ENCODE measurements at regions of chr7 and their contacts with region 1.

Region 1: DNA sequence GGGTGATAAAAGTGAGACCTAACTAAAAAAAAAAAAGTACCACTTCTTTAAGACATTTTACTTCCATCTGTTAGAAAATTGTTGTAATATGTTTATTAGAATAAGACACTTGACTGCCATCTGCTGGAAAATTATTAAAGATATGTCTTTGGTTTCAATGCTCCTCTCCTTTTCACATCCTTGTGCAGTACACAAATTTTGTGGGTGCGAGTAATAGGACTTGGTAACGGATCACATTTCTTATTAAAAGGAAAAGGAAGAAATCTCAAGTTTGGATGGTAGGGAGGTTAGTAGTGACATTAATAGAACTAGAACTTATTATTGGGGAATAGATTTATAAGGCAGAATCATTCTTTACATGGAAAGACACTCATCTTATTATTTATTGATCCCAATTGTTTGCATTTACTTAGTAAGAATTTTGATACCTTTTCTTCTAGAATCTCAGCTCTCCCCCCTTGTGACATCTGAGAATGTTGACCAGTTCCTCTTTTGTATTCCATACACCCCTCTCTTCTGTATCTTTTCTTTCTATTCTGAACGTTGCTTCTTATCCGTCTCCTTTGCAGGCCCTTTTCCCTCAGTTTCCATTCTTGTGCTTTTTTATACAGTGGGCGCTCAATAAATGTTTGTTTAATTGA is 43.1 kb upstream of the RPA3 start:
- DNase-seq: peak in 1 of 2 donors; percentile 67
- ATAC-seq: peak; percentile 18 to 47 (median 37)
- H3K4me3 ChIP-seq: peak overlapping the region; percentile 49
- H3K4me3 Mint-ChIP-seq: peak overlapping the region; percentile 95
- H3K27ac ChIP-seq: peak overlapping the region; percentile 85
- H3K27ac Mint-ChIP-seq: peak overlapping the region; percentile 89 to 97
- H3K4me1 ChIP-seq: no peaks in the 10 kb centered on the region
- H3K4me1 Mint-ChIP-seq: peaks cover 37 to 41% of the 10 kb centered on the region in 2 donors
- H3K27me3 ChIP-seq: no peaks in the 10 kb centered on the region
- H3K27me3 Mint-ChIP-seq: no peaks in the 10 kb centered on the region
- CTCF ChIP-seq: peak; percentile 62

Region 2: GRCh38 chr7:7424151-7424873 is 337.1 kb before region 1 on chr7:
- intact Hi-C with region 1: loop called (anchors 10 kb)
- DNase-seq: peak; percentile 16 to 66
- ATAC-seq: peak; percentile 67 to 84 (median 74)
- H3K4me3 ChIP-seq: peak overlapping the region; percentile 46
- H3K4me3 Mint-ChIP-seq: peak overlapping the region; percentile 82
- H3K27ac ChIP-seq: peak overlapping the region; percentile 13
- H3K27ac Mint-ChIP-seq: peak overlapping the region in 1 of 2 donors; percentile 73
- H3K4me1 ChIP-seq: peaks cover 5% of the 10 kb centered on the region
- H3K4me1 Mint-ChIP-seq: peaks cover 0 to 7% of the 10 kb centered on the region in 2 donors
- H3K27me3 ChIP-seq: no peaks in the 10 kb centered on the region
- H3K27me3 Mint-ChIP-seq: peaks cover 0 to 2% of the 10 kb centered on the region in 2 donors
- CTCF ChIP-seq: peak; percentile 55

Region 3: GRCh38 chr7:7595451-7595850 is 166.0 kb before region 1 on chr7:
- intact Hi-C with region 1: loop called (anchors 1 kb)
- DNase-seq: peak in 1 of 2 donors; percentile 57
- ATAC-seq: peak; percentile 58 to 65 (median 63)
- H3K4me3 ChIP-seq: no peak overlapping the region
- H3K4me3 Mint-ChIP-seq: no peak overlapping the region
- H3K27ac ChIP-seq: no peak overlapping the region
- H3K27ac Mint-ChIP-seq: peak overlapping the region; percentile 58 to 68
- H3K4me1 ChIP-seq: peaks cover 3% of the 10 kb centered on the region
- H3K4me1 Mint-ChIP-seq: peaks cover 7 to 11% of the 10 kb centered on the region in 2 donors
- H3K27me3 ChIP-seq: no peaks in the 10 kb centered on the region
- H3K27me3 Mint-ChIP-seq: no peaks in the 10 kb centered on the region
- CTCF ChIP-seq: peak; percentile 67

Region 4: DNA sequence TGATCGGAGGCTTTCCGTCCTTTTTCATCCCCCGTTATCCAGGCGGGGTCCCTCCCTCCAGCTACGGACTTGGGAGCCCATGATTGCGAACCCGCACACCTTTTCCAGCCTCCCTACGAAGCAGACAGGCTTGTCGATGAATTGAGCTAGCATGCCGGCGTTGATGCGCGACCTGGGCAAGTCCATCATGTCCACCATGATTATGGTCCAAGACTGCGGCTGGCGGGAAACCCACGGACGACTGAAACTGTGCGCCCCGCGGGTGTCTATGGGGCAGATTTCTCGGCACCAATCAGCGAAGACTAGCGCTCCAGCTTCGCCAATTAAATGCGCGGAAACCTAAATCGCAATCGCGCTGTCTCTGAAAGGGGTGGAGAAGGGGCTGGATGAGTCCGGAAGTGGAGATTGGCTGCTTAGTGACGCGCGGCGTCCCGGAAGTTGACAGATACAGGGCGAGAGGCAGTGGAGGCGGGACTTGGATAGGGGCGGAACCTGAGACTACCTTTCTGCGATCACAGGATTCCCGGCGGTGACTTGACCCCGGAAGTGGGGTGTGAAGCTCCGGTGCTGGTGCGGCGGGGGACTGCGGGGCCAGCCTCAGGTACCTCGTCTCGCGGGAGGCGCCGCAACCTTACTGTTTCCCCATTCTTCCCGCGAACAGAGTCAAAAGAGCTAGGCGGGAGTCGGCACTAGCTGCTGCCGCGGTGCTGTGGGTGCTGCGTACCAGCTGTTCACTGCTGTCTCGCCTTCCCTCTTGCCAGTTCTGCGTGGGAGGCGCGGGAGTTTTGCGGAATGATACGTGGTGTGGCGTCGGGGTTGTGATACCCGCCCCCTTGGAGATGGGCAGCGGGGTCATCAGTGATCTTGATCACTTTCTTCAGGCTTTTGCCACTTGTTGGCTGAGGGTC is 121.0 kb before region 1 on chr7 and contains the start of gene UMAD1:
- intact Hi-C with region 1: loop called (anchors 1 kb)
- DNase-seq: peak; percentile 96 to 99
- ATAC-seq: peak; percentile 92 to 99 (median 95)
- H3K4me3 ChIP-seq: peak within 1 kb of the TSS; percentile 77
- H3K4me3 Mint-ChIP-seq: peak within 1 kb of the TSS; percentile 93
- H3K27ac ChIP-seq: peak within 1 kb of the TSS; percentile 90
- H3K27ac Mint-ChIP-seq: peak within 1 kb of the TSS; percentile 94 to 98
- H3K4me1 ChIP-seq: peaks cover 11% of the 10 kb centered on the region
- H3K4me1 Mint-ChIP-seq: peaks cover 26 to 42% of the 10 kb centered on the region in 2 donors
- H3K27me3 ChIP-seq: no peaks in the 10 kb centered on the region
- H3K27me3 Mint-ChIP-seq: no peaks in the 10 kb centered on the region
- CTCF ChIP-seq: no peak
- total RNA-seq, gene UMAD1: 12.3 to 16.5 (median 14.6) TPM

Region 5: GRCh38 chr7:7681179-7681935 is 80.1 kb before region 1 on chr7:
- intact Hi-C with region 1: loop called (anchors 1 kb)
- DNase-seq: peak in 1 of 2 donors; percentile 79
- ATAC-seq: peak; percentile 66 to 87 (median 77)
- H3K4me3 ChIP-seq: no peak overlapping the region
- H3K4me3 Mint-ChIP-seq: no peak overlapping the region
- H3K27ac ChIP-seq: peak overlapping the region; percentile 42
- H3K27ac Mint-ChIP-seq: peak overlapping the region; percentile 59 to 62
- H3K4me1 ChIP-seq: no peaks in the 10 kb centered on the region
- H3K4me1 Mint-ChIP-seq: peaks cover 25 to 29% of the 10 kb centered on the region in 2 donors
- H3K27me3 ChIP-seq: no peaks in the 10 kb centered on the region
- H3K27me3 Mint-ChIP-seq: no peaks in the 10 kb centered on the region
- CTCF ChIP-seq: peak; percentile 77

Region 6: DNA sequence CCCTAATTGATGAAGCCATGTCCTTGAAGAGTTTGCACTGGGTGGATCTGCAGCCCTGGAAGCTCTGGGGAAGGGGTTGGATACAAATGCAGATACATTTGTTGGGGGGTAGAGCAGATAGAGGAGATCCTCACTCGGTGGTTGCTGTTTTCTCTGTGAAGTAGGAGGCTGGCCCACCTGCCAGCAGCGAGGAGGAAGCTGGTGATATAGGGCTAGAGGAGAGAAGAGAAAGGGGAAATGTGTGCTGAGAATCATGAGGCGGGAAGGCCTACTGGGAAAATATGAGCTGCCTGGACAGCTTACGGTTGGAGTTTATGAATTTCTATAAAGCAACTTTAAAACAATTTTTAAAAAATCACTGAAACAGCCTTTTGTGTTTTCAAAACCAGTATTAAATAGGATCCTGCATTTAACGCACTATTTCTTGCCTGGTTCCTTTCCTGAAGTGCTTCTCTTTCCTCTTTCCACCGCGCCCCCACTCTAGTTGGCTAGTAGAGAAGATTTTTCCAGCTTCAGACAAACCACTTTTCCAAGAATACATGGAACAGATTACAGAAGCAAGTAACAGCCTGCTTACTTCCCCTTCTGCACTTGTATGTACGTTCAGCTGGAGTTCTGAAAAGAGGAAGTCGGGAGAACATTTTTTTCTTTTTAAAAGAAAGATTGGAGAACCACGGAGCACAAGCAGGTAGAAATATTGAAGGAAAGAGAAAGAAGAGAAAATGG is 106.5 kb after region 1 on chr7:
- intact Hi-C with region 1: loop called (anchors 5 kb)
- DNase-seq: no peak
- ATAC-seq: peak in 2 of 3 donors; percentile 5 to 33
- H3K4me3 ChIP-seq: no peak overlapping the region
- H3K4me3 Mint-ChIP-seq: no peak overlapping the region
- H3K27ac ChIP-seq: peak overlapping the region; percentile 63
- H3K27ac Mint-ChIP-seq: no peak overlapping the region
- H3K4me1 ChIP-seq: peaks cover 12% of the 10 kb centered on the region
- H3K4me1 Mint-ChIP-seq: peaks cover 0 to 8% of the 10 kb centered on the region in 2 donors
- H3K27me3 ChIP-seq: no peaks in the 10 kb centered on the region
- H3K27me3 Mint-ChIP-seq: no peaks in the 10 kb centered on the region
- CTCF ChIP-seq: no peak

Region 7: DNA sequence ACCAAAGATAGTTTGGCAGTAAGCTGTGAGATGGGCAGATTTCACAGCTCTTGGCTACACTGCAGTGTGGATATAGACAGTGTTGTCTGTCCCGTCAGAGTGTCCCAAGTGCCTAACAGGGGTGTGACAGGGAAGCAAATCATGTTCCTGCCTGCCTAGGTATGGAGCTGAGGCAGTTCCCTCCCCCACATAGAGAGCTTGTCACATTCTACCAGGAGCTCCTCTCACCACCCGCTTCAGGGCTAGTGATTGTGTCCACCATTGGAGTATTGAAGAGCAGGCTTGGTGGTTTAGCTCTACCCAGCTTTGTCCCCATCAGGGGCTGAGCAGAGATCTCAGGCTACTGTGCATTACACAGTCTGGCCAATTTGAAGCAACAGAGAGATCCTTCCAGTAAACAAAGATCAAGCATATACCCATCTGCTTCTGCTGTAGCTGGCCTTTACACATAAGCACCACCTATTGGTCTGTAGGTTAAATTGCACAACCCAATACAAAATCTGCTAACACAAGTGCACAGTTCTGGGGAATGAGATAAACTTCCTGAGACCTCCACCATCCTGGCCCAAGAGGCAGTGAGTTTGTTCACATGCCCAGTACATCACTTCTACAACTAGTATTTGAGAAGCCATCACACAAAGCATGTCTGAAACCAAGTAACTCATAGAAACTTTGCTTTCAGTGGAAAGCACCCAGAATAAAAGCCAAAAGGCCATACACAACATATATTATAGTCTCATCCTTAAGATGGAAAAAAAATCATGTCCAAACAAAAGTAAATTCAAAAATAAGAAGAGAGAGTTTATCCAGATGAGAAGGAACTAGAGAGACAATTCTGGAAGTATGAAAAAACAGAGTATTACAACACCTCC is 274.4 kb after region 1 on chr7:
- intact Hi-C with region 1: loop called (anchors 5 kb)
- DNase-seq: peak in 1 of 2 donors; percentile 68
- ATAC-seq: peak; percentile 92 to 99 (median 97)
- H3K4me3 ChIP-seq: no peak overlapping the region
- H3K4me3 Mint-ChIP-seq: no peak overlapping the region
- H3K27ac ChIP-seq: peak overlapping the region; percentile 6
- H3K27ac Mint-ChIP-seq: peak overlapping the region; percentile 46 to 82
- H3K4me1 ChIP-seq: peaks cover 15% of the 10 kb centered on the region
- H3K4me1 Mint-ChIP-seq: peaks cover 28 to 34% of the 10 kb centered on the region in 2 donors
- H3K27me3 ChIP-seq: no peaks in the 10 kb centered on the region
- H3K27me3 Mint-ChIP-seq: no peaks in the 10 kb centered on the region
- CTCF ChIP-seq: peak; percentile 79

Measured in natural killer cell (primary cell).